Activated T-helper 2 cell treated with anti-CD3 and anti-CD28 coated beads, Interferon-gamma antibody, Interleukin-2, Interleukin-4, amounts not matched to agents 10 μg/mL and 5 μg/mL and 100 μg/mL, durations not matched to agents 14 hours and 24 hours and 36 hours (primary cell): ENCODE measurements at regions of chr21 and their contacts with region 1.

Region 1: DNA sequence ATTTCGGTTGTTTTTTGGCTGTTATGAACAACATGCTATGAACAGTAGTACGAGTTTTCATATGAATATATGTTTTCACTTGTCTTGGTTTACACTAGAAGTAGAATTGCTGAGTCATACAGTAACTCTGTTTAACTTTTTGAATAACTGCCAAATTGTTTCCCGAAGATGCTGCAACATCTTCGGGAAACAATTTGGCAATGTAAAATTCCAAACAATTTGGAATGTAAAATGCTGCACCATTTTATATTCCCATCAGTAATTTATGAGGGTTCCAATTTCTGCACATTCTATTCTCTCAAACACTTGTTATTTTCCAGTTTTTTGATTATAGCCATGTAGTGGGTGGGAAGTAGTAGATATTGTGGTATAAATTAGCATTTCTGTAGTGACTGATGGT is 11.6 kb downstream of the PCBP3 start:
- DNase-seq: no peak
- H3K4me3 Mint-ChIP-seq: no peak overlapping the region
- H3K27ac Mint-ChIP-seq: no peak overlapping the region
- H3K4me1 Mint-ChIP-seq: peaks cover 8% of the 10 kb centered on the region
- H3K27me3 Mint-ChIP-seq: no peaks in the 10 kb centered on the region

Region 2: DNA sequence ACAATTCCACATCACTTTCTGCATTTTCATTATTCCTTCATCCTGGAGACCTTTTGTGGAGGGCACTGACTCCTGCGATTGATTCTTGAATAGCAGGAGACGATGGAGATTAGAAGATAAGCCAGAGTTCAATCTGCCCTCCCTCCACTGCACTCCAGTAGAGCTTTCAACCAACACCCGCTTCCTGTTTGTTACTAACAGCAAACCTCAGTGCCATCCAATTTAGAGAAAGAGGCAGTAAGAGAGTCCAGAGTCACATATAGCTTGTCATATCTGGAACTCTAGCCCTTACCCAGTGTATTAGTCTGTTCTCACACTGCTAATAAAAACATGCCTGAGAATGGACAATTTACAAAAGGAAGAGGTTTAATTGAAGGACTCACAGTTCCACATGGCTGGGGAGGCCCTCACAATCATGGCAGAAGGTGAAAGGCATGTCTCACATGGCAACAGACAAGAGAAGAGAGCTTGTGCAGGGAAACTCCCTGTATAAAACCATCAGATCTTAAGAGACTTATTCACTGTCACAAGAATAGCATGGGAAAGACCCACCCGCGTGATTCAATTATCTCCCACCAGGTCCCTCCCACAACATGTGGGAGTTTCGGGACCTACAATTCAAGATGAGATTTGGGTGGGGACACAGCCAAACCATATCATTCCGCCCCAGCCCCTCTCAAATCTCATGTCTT is 44.3 kb after region 1 on chr21:
- intact Hi-C with region 1: no loop called
- DNase-seq: no peak
- H3K4me3 Mint-ChIP-seq: no peak overlapping the region
- H3K27ac Mint-ChIP-seq: no peak overlapping the region
- H3K4me1 Mint-ChIP-seq: peaks cover 11% of the 10 kb centered on the region
- H3K27me3 Mint-ChIP-seq: no peaks in the 10 kb centered on the region

Region 3: DNA sequence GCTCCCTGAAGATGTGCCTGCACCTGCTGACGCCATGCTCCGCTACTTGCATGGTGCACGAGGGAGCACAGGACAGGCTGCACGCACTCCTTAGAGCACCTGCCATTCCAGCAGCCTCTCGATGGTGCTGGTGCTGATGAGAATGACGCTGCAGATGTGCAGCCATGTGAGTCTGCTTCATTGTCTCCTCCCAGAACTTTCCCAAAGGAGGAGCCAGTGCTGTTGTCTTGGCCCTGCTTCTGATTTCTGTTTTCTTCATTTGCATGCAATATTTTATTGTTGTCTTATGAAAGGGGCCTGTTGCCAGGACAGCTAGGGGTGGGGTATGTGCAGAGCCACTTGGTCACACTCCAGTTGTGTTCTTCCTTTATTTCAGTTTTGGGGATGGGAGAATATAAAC is 58.5 kb after region 1 on chr21:
- intact Hi-C with region 1: loop called (anchors 10 kb)
- DNase-seq: no peak
- H3K4me3 Mint-ChIP-seq: no peak overlapping the region
- H3K27ac Mint-ChIP-seq: no peak overlapping the region
- H3K4me1 Mint-ChIP-seq: peaks cover 11% of the 10 kb centered on the region
- H3K27me3 Mint-ChIP-seq: peaks cover 4% of the 10 kb centered on the region